T-cell (primary cell): ENCODE measurements at regions of chrX and their contacts with region 1.

Region 1: DNA sequence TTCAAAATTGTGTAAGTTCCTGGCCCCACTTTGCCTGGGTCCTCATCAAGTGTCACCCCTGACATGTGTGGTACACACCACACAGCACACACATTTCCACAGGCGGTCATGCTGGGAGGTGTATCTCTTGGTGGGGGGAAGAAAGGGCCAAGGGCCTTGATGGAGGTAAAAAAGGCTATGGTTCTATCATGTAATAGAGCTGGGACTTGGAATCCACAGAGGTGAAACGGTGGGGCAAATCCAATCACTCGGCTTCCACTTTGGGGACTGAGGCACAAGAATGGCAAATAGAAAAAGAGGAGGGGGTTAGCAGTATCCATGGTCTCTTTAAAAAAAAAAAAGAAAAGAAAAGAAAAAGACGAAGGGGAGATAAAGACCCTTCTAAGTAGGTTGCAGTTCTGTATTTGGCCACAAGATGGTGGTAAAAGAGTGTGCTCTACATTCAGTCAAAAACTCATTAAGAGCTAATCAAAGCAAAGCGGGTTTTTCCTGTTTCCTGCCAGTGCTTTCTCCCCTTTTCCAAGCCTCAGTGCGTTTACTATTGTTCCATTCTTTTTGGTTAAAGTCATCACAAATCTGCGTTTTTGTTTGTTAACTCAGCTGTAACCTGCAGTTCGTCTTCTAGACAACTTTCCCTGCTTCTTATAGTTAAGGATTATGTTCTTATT is 37.0 kb upstream of the ATP6AP2 start:
- DNase-seq: peak in 3 of 35 experiments; percentile 9 to 69 (median 13)
- ATAC-seq: no peak
- H3K4me3 ChIP-seq: no peak overlapping the region
- H3K4me3 Mint-ChIP-seq: no peak overlapping the region
- H3K27ac ChIP-seq: no peak overlapping the region
- H3K27ac Mint-ChIP-seq: no peak overlapping the region
- H3K4me1 ChIP-seq: peaks cover 0 to 13% of the 10 kb centered on the region in 2 experiments
- H3K4me1 Mint-ChIP-seq: peaks cover 16 to 25% (median 19%) of the 10 kb centered on the region in 3 donors
- H3K27me3 ChIP-seq: no peaks in the 10 kb centered on the region
- H3K27me3 Mint-ChIP-seq: peaks cover 0 to 16% of the 10 kb centered on the region in 2 donors

Region 2: DNA sequence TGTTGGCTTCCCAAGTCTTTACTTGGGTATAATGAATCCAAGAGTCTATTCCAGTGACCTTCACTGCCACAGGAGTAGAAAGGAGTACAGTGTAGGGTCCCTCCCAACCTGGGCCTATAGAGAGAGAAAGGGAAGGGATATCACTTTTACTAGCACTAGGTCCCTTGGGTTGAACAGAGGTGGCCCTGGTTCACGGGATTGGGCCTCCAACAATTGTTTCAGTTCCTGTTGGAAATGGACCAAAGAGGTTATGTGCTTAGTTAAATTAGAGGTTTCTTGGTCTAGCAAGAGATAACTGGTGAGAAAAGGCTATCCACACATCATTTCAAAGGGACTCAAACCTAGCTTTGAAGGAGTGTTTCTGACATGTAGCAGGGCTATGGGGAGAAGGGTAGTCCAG is 248.6 kb after region 1 on chrX:
- CTCF ChIA-PET with region 1: interaction called, 3 to 11 read pairs
- POLR2A ChIA-PET with region 1: no interaction called
- DNase-seq: no peak
- ATAC-seq: no peak
- H3K4me3 ChIP-seq: no peak overlapping the region
- H3K4me3 Mint-ChIP-seq: no peak overlapping the region
- H3K27ac ChIP-seq: no peak overlapping the region
- H3K27ac Mint-ChIP-seq: no peak overlapping the region
- H3K4me1 ChIP-seq: peaks cover 0 to 3% of the 10 kb centered on the region in 2 experiments
- H3K4me1 Mint-ChIP-seq: peaks cover 0 to 4% (median 3%) of the 10 kb centered on the region in 3 donors
- H3K27me3 ChIP-seq: no peaks in the 10 kb centered on the region
- H3K27me3 Mint-ChIP-seq: peaks cover 5 to 15% of the 10 kb centered on the region in 2 donors